CD8-positive, alpha-beta T cell (primary cell): ENCODE measurements at regions of chr12 and their contacts with region 1.

Region 1: GRCh38 chr12:68387338-68387737 is 55.2 kb upstream of the MDM1 start:
- DNase-seq: no peak
- ATAC-seq: no peak
- H3K4me3 ChIP-seq: no peak overlapping the region
- H3K4me3 Mint-ChIP-seq: no peak overlapping the region
- H3K27ac ChIP-seq: no peak overlapping the region
- H3K27ac Mint-ChIP-seq: no peak overlapping the region
- H3K4me1 ChIP-seq: peaks cover 5% of the 10 kb centered on the region
- H3K4me1 Mint-ChIP-seq: peaks cover 18% of the 10 kb centered on the region
- H3K27me3 ChIP-seq: no peaks in the 10 kb centered on the region
- H3K27me3 Mint-ChIP-seq: no peaks in the 10 kb centered on the region
- CTCF ChIP-seq: no peak

Region 2: DNA sequence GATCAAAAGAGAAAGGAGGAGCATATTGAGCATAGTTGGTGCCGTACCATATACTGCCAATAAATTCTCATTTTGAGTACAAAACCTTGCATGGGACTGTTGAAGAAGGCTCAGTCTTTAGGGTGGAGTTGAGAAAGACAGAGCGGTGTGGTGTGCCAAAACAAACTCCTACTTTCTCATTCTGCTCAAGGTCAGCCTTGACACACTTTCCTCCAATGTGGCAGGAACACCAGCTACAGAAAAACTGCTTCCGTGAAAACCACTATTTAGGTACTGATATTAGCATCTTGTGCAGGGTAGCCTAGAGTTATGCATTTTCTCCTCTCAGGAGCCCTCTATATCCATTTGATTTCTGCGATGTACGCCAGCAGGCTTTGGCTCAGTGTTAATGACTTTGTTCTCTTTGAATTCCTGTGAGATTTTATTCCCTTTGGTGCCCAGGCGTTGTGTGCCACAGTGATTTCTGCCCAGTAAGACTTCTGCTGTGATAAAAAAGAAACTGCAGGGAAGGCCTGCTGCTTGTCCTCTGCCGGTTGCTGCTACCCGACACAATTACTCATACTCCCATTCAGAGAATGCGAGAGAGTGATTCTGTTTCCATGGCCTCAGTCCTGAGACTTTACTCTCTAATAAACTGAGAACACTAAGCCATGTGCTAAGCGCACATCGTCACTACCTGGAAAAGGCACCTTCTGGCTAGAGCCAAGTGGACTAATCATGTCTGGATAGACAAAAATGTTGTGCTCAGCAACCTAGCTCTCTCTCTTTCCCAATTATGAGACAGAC is 33.1 kb after region 1 on chr12:
- CTCF ChIA-PET with region 1: no interaction called
- POLR2A ChIA-PET with region 1: interaction called, 4 read pairs
- intact Hi-C with region 1: loop called in 1 of 2 experiments (anchors 5 kb)
- DNase-seq: peak in 1 of 9 experiments; percentile 22
- ATAC-seq: no peak
- H3K4me3 ChIP-seq: no peak overlapping the region
- H3K4me3 Mint-ChIP-seq: no peak overlapping the region
- H3K27ac ChIP-seq: peak overlapping the region in 1 of 2 experiments; percentile 24
- H3K27ac Mint-ChIP-seq: peak overlapping the region; percentile 5
- H3K4me1 ChIP-seq: peaks cover 14% of the 10 kb centered on the region
- H3K4me1 Mint-ChIP-seq: peaks cover 31% of the 10 kb centered on the region
- H3K27me3 ChIP-seq: no peaks in the 10 kb centered on the region
- H3K27me3 Mint-ChIP-seq: no peaks in the 10 kb centered on the region
- CTCF ChIP-seq: no peak